ENCODE measurements at regions of chr12 and their contacts with region 1.

Region 1: GRCh38 chr12:57390174-57390573 is 40.7 kb downstream of the R3HDM2 start:
- DNase-seq: no peak
- H3K4me3 ChIP-seq: no peak overlapping the region
- H3K27ac ChIP-seq: peak overlapping the region; percentile 43
- H3K4me1 ChIP-seq: peaks cover 26% of the 10 kb centered on the region
- H3K27me3 ChIP-seq: no peaks in the 10 kb centered on the region
- CTCF ChIP-seq: no peak

Region 2: DNA sequence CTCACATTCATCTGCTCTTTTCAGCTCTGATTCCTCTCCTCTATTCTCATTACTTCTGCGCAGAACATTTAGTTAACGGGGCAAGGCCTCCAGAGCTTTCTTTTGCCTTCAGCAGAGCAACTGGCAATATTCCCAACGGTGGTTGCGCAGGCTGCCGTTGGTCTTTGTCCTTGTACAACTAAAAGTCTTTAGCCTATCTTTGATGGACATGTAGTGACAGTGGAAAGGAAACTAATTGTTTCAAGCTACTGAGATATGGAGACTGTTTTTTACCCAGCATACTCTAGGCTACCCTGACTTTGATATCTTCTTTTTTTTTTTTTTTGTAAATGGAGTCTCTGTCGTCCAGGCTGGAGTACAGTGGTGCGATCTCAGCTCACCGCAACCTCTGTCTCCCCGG is 28.1 kb after region 1 on chr12:
- intact Hi-C with region 1: loop called (anchors 2 kb)
- DNase-seq: no peak
- H3K4me3 ChIP-seq: no peak overlapping the region
- H3K27ac ChIP-seq: peak overlapping the region; percentile 40
- H3K4me1 ChIP-seq: peaks cover 32% of the 10 kb centered on the region
- H3K27me3 ChIP-seq: no peaks in the 10 kb centered on the region
- CTCF ChIP-seq: no peak

Region 3: GRCh38 chr12:57475271-57476161 is 85.3 kb after region 1 on chr12:
- intact Hi-C with region 1: no loop called
- DNase-seq: no peak
- H3K4me3 ChIP-seq: peak overlapping the region; percentile 64
- H3K27ac ChIP-seq: no peak overlapping the region
- H3K4me1 ChIP-seq: peaks cover 20% of the 10 kb centered on the region
- H3K27me3 ChIP-seq: peaks cover 99% of the 10 kb centered on the region
- CTCF ChIP-seq: no peak